Motor neuron (in vitro differentiated cells): ENCODE measurements at regions of chr18 and their contacts with region 1.

Region 1: DNA sequence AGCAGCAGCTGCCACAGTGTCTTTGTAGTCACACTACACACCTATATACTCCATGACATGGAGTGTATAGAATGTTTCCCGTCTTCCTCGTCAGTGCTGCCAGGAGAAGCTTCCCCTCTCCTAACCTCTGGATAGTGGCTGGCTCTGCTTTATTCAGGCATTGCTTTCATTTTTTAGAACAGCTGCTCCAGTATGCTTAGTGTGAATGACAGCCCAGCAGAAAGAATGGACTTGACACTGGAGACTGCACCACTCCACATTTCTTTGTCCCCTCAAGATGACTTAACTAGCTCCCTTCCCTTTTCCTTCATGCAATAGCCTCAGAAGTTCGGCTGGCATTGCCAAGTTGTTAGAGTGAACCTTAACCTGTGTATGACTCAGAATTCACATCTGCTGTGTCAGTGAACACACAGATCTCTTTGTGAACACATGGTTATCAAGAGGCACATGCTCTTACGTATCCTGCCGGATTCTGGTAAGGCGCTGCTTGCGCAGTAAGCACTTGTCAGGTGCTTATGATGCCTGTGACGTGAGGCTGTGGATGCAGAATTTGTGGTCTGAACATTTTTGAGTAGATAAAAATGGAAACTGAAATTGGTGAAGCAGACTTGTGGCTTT is 73.9 kb downstream of the NEDD4L start:
- ATAC-seq: peak; percentile 28 to 84 (median 63)
- H3K4me3 ChIP-seq: no peak overlapping the region
- H3K27ac ChIP-seq: no peak overlapping the region
- H3K4me1 ChIP-seq: peaks cover 8 to 10% of the 10 kb centered on the region in 2 donors

Region 2: GRCh38 chr18:57921708-57922107 is 196.2 kb before region 1 on chr18:
- in situ Hi-C with region 1: no loop called
- ATAC-seq: peak in 7 of 8 experiments; percentile 17 to 92 (median 71)
- H3K4me3 ChIP-seq: no peak overlapping the region
- H3K27ac ChIP-seq: no peak overlapping the region
- H3K4me1 ChIP-seq: no peaks in the 10 kb centered on the region

Region 3: GRCh38 chr18:58064406-58064998 is 53.4 kb before region 1 on chr18:
- in situ Hi-C with region 1: loop called in 1 of 9 experiments (anchors 10 kb)
- ATAC-seq: no peak
- H3K4me3 ChIP-seq: no peak overlapping the region
- H3K27ac ChIP-seq: no peak overlapping the region
- H3K4me1 ChIP-seq: peaks cover 0 to 5% of the 10 kb centered on the region in 2 donors

Region 4: GRCh38 chr18:58402247-58402646 is 284.4 kb after region 1 on chr18:
- in situ Hi-C with region 1: no loop called
- ATAC-seq: peak in 6 of 8 experiments; percentile 13 to 70 (median 47)
- H3K4me3 ChIP-seq: no peak overlapping the region
- H3K27ac ChIP-seq: no peak overlapping the region
- H3K4me1 ChIP-seq: peaks cover 13 to 14% of the 10 kb centered on the region in 2 donors